Dorsolateral prefrontal cortex (tissue), 120 donors: ENCODE measurements at regions of chr9 and their contacts with region 1.

Region 1: GRCh38 chr9:5582835-5583195 is 46.1 kb upstream of the RIC1 start:
- DNase-seq: no peak
- H3K4me3 ChIP-seq: no peak overlapping the region
- H3K27ac ChIP-seq: no peak overlapping the region
- H3K27me3 ChIP-seq: no peaks in the 10 kb centered on the region
- CTCF ChIP-seq: no peak

Region 2: GRCh38 chr9:4750023-4750673 is 832.7 kb before region 1 on chr9:
- intact Hi-C with region 1: loop called in 1 of 2 experiments (anchors 10 kb)
- DNase-seq: no peak
- H3K4me3 ChIP-seq: no peak overlapping the region
- H3K27ac ChIP-seq: no peak overlapping the region
- H3K27me3 ChIP-seq: no peaks in the 10 kb centered on the region
- CTCF ChIP-seq: peak in 55 of 56 donors; percentile 36 to 72 (median 57)

Region 3: GRCh38 chr9:5425006-5425628 is 157.7 kb before region 1 on chr9:
- intact Hi-C with region 1: loop called in 1 of 2 experiments (anchors 5 kb)
- DNase-seq: no peak
- H3K4me3 ChIP-seq: no peak overlapping the region
- H3K27ac ChIP-seq: no peak overlapping the region
- H3K27me3 ChIP-seq: no peaks in the 10 kb centered on the region
- CTCF ChIP-seq: peak in 20 of 56 donors; percentile 9 to 55 (median 24)

Region 4: GRCh38 chr9:5450359-5451091 is 132.3 kb before region 1 on chr9 and contains the start of gene CD274:
- intact Hi-C with region 1: loop called in 1 of 2 experiments (anchors 10 kb)
- DNase-seq: peak; percentile 59 to 88 (median 72)
- H3K4me3 ChIP-seq: peak within 1 kb of the TSS; percentile 46 to 85 (median 70)
- H3K27ac ChIP-seq: peak within 1 kb of the TSS in 57 of 59 donors; percentile 2 to 89 (median 67)
- H3K27me3 ChIP-seq: no peaks in the 10 kb centered on the region
- CTCF ChIP-seq: peak in 55 of 56 donors; percentile 34 to 83 (median 67)
- total RNA-seq, gene CD274: 1.2 to 8.9 (median 3.7) TPM

Region 5: GRCh38 chr9:5688109-5688508 is 105.3 kb after region 1 on chr9:
- intact Hi-C with region 1: no loop called
- DNase-seq: no peak
- H3K4me3 ChIP-seq: no peak overlapping the region
- H3K27ac ChIP-seq: no peak overlapping the region
- H3K27me3 ChIP-seq: no peaks in the 10 kb centered on the region
- CTCF ChIP-seq: no peak